B cell (primary cell): ENCODE measurements at regions of chr6 and their contacts with region 1.

Region 1: DNA sequence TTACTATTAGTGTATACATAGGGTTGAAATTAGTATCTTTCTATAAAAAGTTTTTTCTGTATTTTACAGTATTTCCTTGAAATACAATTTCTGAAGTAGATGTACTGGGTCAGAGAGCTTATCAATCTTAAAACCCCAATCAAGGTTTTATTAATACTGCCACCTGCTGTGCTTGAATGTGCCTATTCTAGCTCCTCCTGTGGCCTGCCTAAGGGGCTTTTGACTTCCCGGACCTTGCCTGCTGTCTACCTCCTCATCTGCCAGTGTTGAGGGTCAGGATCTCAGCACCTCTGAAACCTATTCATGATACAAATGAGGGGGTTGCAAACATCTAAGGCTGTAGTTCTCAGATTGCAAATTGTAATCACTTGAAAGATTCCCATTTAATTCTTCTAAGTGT is 9.2 kb downstream of the PACRG start:
- DNase-seq: no peak
- ATAC-seq: no peak
- H3K4me3 ChIP-seq: no peak overlapping the region
- H3K4me3 Mint-ChIP-seq: no peak overlapping the region
- H3K27ac ChIP-seq: no peak overlapping the region
- H3K27ac Mint-ChIP-seq: no peak overlapping the region
- H3K4me1 ChIP-seq: no peaks in the 10 kb centered on the region
- H3K4me1 Mint-ChIP-seq: no peaks in the 10 kb centered on the region
- H3K27me3 ChIP-seq: no peaks in the 10 kb centered on the region
- H3K27me3 Mint-ChIP-seq: peaks cover 7% of the 10 kb centered on the region
- CTCF ChIP-seq: no peak

Region 2: DNA sequence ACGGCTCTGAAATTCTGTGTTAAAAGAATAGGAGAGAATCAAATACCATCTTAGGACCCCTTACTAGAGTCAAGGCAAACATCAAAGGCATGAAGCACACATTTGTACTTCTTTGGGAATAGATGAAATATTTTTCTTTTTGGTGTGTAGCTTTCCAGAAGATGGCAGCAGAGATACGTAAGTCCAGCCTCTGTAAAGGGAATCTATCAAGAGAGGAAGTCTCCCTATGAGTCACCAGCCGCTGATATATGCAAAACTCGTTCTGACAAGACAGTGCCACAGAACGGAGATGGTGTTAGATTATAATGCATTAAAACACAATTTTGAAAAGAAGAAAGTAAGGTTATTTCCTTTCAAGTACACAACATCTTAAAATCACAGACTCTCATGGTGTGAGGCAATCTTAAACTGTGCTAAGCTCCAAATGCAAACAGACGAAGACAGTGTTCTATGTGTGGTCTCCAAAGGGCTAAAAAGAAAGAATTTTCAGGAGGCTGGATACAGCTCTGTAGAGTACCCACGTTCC is 1343.1 kb before region 1 on chr6:
- CTCF ChIA-PET with region 1: no interaction called
- POLR2A ChIA-PET with region 1: no interaction called
- intact Hi-C with region 1: loop called (anchors 5 kb)
- DNase-seq: peak; percentile 61
- ATAC-seq: peak; percentile 65
- H3K4me3 ChIP-seq: no peak overlapping the region
- H3K4me3 Mint-ChIP-seq: no peak overlapping the region
- H3K27ac ChIP-seq: no peak overlapping the region
- H3K27ac Mint-ChIP-seq: no peak overlapping the region
- H3K4me1 ChIP-seq: peaks cover 0 to 5% of the 10 kb centered on the region in 2 donors
- H3K4me1 Mint-ChIP-seq: no peaks in the 10 kb centered on the region
- H3K27me3 ChIP-seq: no peaks in the 10 kb centered on the region
- H3K27me3 Mint-ChIP-seq: peaks cover 7% of the 10 kb centered on the region
- CTCF ChIP-seq: peak; percentile 67

Region 3: DNA sequence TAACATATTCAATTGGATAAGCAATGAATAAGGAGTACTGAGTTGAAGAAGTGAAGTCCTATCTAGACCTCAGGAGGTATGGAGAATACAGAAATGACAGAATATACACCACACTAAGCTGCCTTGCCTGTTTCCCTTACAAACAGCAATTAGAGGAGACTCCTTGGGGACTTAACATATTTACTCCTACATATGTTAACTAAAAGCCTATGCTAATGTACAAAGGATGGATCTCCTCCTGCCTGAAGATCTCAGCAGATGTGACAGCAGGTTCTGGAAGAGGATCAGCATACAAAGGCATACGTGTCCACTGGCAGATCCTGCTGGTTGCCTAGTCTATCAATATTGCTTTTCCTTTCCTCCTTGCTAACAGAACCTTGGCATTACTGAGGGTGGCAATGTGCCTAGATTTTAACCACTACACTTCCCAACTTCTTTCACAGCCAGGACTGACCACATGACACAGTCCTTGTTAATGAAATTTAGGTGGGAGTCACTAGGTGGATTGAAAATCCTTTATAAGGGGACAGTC is 39.0 kb before region 1 on chr6:
- CTCF ChIA-PET with region 1: no interaction called
- POLR2A ChIA-PET with region 1: no interaction called
- intact Hi-C with region 1: loop called (anchors 1 kb)
- DNase-seq: no peak
- ATAC-seq: no peak
- H3K4me3 ChIP-seq: no peak overlapping the region
- H3K4me3 Mint-ChIP-seq: no peak overlapping the region
- H3K27ac ChIP-seq: no peak overlapping the region
- H3K27ac Mint-ChIP-seq: no peak overlapping the region
- H3K4me1 ChIP-seq: no peaks in the 10 kb centered on the region
- H3K4me1 Mint-ChIP-seq: no peaks in the 10 kb centered on the region
- H3K27me3 ChIP-seq: no peaks in the 10 kb centered on the region
- H3K27me3 Mint-ChIP-seq: no peaks in the 10 kb centered on the region
- CTCF ChIP-seq: no peak